ENCODE measurements at regions of chr21 and their contacts with region 1.

Region 1: DNA sequence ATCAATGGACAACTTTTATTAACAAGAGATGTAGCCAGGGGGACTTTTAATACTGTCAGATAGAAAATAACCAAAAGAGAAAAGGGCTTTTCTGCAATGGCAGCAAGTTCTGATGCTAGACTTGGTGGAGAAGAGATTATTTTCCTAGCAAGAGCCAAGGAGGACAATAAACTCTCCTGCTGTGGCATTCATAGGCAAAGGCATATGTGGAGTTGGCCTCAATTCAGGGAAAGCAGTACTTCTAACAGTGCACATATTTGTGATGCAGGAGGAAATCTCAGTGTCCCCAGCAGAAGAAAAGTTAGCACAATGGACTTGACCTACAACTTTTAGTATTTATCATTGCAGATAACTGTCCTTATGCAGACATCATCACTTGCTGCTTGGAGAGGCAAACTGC is 75.1 kb upstream of the GRIK1 start:
- DNase-seq: no peak
- H3K4me3 ChIP-seq: no peak overlapping the region
- H3K27ac ChIP-seq: no peak overlapping the region
- H3K4me1 ChIP-seq: no peaks in the 10 kb centered on the region
- H3K27me3 ChIP-seq: no peaks in the 10 kb centered on the region
- CTCF ChIP-seq: no peak
- POLR2A ChIP-seq: no peak

Region 2: DNA sequence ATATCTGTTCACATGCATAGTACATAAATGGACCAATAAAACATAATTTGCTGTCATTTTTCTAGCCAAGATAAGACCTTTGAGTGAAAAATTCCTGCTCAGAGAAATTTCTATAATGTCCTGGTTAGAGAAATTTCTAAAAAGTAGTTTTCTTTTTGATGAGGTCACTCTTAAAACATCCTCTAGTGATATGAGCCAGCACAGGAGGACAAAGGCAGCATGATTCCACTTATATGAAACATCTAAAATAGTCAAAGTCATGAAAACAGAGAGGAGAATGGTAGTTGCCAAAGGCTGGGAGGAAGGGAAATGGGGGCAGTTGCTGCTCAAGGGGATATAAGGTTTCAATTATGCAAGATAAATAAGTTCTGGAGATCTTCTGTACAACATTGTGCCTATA is 476.8 kb before region 1 on chr21:
- intact Hi-C with region 1: loop called (anchors 10 kb)
- DNase-seq: no peak
- H3K4me3 ChIP-seq: no peak overlapping the region
- H3K27ac ChIP-seq: no peak overlapping the region
- H3K4me1 ChIP-seq: no peaks in the 10 kb centered on the region
- H3K27me3 ChIP-seq: no peaks in the 10 kb centered on the region
- CTCF ChIP-seq: no peak
- POLR2A ChIP-seq: no peak